Body of pancreas (tissue), 4 donors: ENCODE measurements at regions of chr18 and their contacts with region 1.

Region 1: GRCh38 chr18:11733031-11733430 is 44.0 kb downstream of the GNAL start:
- DNase-seq: peak; percentile 69 to 80 (median 74)
- ATAC-seq: peak; percentile 89
- H3K4me3 ChIP-seq: no peak overlapping the region
- H3K27ac ChIP-seq: no peak overlapping the region
- H3K4me1 ChIP-seq: no peaks in the 10 kb centered on the region
- H3K27me3 ChIP-seq: no peaks in the 10 kb centered on the region
- CTCF ChIP-seq: peak; percentile 76 to 93 (median 87)
- POLR2A ChIP-seq: no peak

Region 2: GRCh38 chr18:11872479-11873136 is 139.6 kb after region 1 on chr18:
- intact Hi-C with region 1: loop called (anchors 10 kb)
- DNase-seq: peak; percentile 41 to 68 (median 52)
- ATAC-seq: peak; percentile 84
- H3K4me3 ChIP-seq: no peak overlapping the region
- H3K27ac ChIP-seq: peak overlapping the region in 2 of 4 donors; percentile 32 to 68
- H3K4me1 ChIP-seq: peaks cover 6% of the 10 kb centered on the region
- H3K27me3 ChIP-seq: no peaks in the 10 kb centered on the region
- CTCF ChIP-seq: peak in 6 of 7 experiments; percentile 9 to 69 (median 57)
- POLR2A ChIP-seq: no peak

Region 3: DNA sequence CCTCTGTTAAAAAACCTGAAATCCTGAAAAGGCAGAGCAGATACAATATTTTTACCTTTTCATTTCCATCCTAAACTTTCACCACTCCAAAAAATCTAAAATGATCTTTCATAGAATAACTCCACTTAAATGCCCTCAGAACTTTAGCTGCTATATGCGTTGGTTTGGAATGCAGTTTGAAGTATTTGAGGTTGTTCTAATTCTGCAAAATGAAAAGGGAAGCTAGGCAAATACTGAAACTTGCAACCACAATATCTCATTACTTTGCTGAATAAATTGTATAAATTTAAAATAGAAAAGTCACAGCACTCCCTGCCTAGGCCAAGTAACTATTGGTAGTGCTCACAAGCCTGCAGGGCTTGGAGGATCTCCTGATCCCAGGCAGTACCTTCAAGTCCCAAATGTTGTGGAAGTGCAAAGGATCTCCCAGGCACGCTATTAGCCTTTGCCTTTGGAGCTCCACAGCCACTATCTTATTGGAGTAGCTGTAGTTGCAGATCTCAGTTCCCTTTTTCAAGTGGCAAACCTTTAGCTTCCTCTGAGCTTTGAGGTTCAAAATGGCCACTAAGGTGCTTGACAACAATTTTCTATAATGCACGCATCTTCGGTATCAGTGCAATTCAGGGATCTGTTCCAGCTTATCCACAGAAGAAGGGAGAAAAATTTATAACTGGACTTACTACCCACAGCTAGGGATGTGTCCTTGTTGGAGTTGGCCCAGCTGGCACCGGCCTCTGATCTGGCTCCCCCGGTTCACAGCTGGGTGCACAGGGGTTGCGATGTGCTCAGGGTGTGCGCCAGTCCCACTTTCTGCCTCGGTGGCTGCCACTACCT is 317.2 kb after region 1 on chr18:
- intact Hi-C with region 1: loop called (anchors 10 kb)
- DNase-seq: no peak
- ATAC-seq: no peak
- H3K4me3 ChIP-seq: no peak overlapping the region
- H3K27ac ChIP-seq: no peak overlapping the region
- H3K4me1 ChIP-seq: peaks cover 6% of the 10 kb centered on the region
- H3K27me3 ChIP-seq: no peaks in the 10 kb centered on the region
- CTCF ChIP-seq: no peak
- POLR2A ChIP-seq: no peak